MCF 10A (cell line): ENCODE measurements at regions of chr7 and their contacts with region 1.

Region 1: DNA sequence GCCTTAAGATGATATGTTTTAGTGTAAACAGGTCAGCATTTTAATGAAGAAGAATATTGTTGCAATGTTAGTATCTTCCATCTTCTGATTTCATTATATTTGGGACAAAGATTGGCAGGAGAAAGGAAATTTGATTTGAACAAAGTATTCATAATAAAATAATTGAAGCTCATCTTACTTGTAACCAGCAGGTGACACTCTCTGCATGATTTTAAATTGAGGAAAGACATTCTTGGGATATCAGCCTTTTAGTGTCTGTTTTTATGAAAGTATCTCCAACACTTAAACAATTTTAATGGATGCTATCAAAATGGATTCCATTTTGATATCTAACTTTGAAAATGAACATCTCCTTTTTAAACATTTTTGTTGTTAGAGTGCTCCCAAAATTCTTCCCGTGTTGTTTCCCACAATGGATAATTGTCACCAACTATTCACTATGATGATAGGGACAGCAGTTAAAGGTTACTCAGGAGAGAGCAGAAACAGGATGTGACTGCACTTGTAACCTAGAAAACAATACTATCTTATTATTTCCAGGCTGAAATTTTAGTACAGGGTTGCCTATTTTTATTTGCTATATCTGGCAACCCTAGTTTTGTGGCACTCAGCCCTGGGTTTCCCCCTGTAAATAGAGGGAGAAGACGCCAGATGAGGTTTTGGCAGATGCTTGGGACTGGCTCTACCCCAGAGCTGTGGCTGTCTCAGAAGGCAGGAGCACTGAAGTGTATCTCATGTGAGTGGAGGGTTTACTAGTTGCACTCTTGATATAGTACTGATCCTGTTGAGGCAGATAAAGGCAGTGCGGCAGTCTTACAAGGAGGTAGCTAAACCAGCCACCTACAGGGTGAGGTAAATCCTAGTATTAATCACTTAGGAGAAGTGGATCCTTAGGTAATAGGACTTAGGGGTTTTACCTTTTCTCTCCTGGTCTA is 31.0 kb upstream of the ABCB4 start:
- DNase-seq: peak; percentile 27
- H3K4me3 Mint-ChIP-seq: no peak overlapping the region
- H3K27ac Mint-ChIP-seq: no peak overlapping the region
- H3K4me1 Mint-ChIP-seq: no peaks in the 10 kb centered on the region
- H3K27me3 Mint-ChIP-seq: no peaks in the 10 kb centered on the region
- CTCF ChIP-seq: peak; percentile 60

Region 2: GRCh38 chr7:87013836-87014182 is 492.7 kb before region 1 on chr7:
- CTCF ChIA-PET with region 1: no interaction called
- POLR2A ChIA-PET with region 1: no interaction called
- intact Hi-C with region 1: no loop called
- DNase-seq: no peak
- H3K4me3 Mint-ChIP-seq: no peak overlapping the region
- H3K27ac Mint-ChIP-seq: no peak overlapping the region
- H3K4me1 Mint-ChIP-seq: peaks cover 9% of the 10 kb centered on the region
- H3K27me3 Mint-ChIP-seq: peaks cover 3% of the 10 kb centered on the region
- CTCF ChIP-seq: no peak

Region 3: DNA sequence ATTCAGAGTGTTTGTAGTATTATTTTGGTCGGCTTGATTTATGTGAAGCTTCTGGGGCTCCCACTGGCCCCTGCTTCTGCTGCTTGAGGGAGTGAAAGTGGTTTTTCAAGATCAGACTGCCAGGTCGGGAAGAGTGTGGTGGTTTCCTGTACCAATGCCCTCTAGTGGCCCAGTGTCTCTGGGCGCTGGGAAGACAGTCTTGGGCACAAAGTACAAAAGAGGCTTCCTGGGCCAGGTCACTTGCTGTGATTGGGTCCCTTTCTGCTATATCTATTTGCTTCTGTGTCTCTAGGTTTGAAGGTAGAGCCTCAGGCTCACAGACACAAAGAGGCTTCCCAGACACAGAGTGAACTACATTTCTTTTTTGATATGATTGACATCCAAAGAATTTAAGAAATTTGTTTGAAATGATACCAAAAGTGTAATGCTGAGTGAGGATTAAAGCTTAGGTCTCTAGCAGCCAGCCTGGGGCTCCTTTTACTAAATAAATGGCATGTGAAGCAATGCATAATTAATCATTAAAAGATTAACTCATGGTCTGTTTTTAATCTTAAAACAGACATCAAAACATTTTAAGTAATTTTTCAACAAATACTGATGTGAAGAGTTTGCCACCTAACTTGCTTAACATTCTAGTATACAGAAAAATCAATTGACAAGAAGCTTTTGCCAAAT is 57.9 kb after region 1 on chr7:
- CTCF ChIA-PET with region 1: interaction called, 6 read pairs
- POLR2A ChIA-PET with region 1: no interaction called
- intact Hi-C with region 1: loop called (anchors 2 kb)
- DNase-seq: peak; percentile 41
- H3K4me3 Mint-ChIP-seq: no peak overlapping the region
- H3K27ac Mint-ChIP-seq: no peak overlapping the region
- H3K4me1 Mint-ChIP-seq: no peaks in the 10 kb centered on the region
- H3K27me3 Mint-ChIP-seq: peaks cover 26% of the 10 kb centered on the region
- CTCF ChIP-seq: peak; percentile 35

Region 4: GRCh38 chr7:87658553-87658952 is 152.0 kb after region 1 on chr7:
- CTCF ChIA-PET with region 1: no interaction called
- POLR2A ChIA-PET with region 1: no interaction called
- intact Hi-C with region 1: no loop called
- DNase-seq: no peak
- H3K4me3 Mint-ChIP-seq: no peak overlapping the region
- H3K27ac Mint-ChIP-seq: no peak overlapping the region
- H3K4me1 Mint-ChIP-seq: no peaks in the 10 kb centered on the region
- H3K27me3 Mint-ChIP-seq: peaks cover 96% of the 10 kb centered on the region
- CTCF ChIP-seq: no peak

Region 5: GRCh38 chr7:87797798-87798403 is 291.4 kb after region 1 on chr7:
- CTCF ChIA-PET with region 1: interaction called, 6 read pairs
- POLR2A ChIA-PET with region 1: no interaction called
- intact Hi-C with region 1: loop called (anchors 5 kb)
- DNase-seq: peak; percentile 71
- H3K4me3 Mint-ChIP-seq: no peak overlapping the region
- H3K27ac Mint-ChIP-seq: no peak overlapping the region
- H3K4me1 Mint-ChIP-seq: no peaks in the 10 kb centered on the region
- H3K27me3 Mint-ChIP-seq: peaks cover 2% of the 10 kb centered on the region
- CTCF ChIP-seq: peak; percentile 54

Region 6: GRCh38 chr7:87866089-87866488 is 359.6 kb after region 1 on chr7:
- CTCF ChIA-PET with region 1: interaction called, 10 read pairs
- POLR2A ChIA-PET with region 1: no interaction called
- intact Hi-C with region 1: no loop called
- DNase-seq: no peak
- H3K4me3 Mint-ChIP-seq: no peak overlapping the region
- H3K27ac Mint-ChIP-seq: no peak overlapping the region
- H3K4me1 Mint-ChIP-seq: peaks cover 6% of the 10 kb centered on the region
- H3K27me3 Mint-ChIP-seq: no peaks in the 10 kb centered on the region
- CTCF ChIP-seq: no peak

Region 7: GRCh38 chr7:88111136-88111743 is 604.7 kb after region 1 on chr7:
- CTCF ChIA-PET with region 1: interaction called, 8 read pairs
- POLR2A ChIA-PET with region 1: interaction called, 5 read pairs
- intact Hi-C with region 1: loop called (anchors 1 kb)
- DNase-seq: peak; percentile 43
- H3K4me3 Mint-ChIP-seq: no peak overlapping the region
- H3K27ac Mint-ChIP-seq: no peak overlapping the region
- H3K4me1 Mint-ChIP-seq: no peaks in the 10 kb centered on the region
- H3K27me3 Mint-ChIP-seq: peaks cover 77% of the 10 kb centered on the region
- CTCF ChIP-seq: peak; percentile 51

Region 8: GRCh38 chr7:88146616-88147015 is 640.1 kb after region 1 on chr7:
- CTCF ChIA-PET with region 1: no interaction called
- POLR2A ChIA-PET with region 1: no interaction called
- intact Hi-C with region 1: no loop called
- DNase-seq: no peak
- H3K4me3 Mint-ChIP-seq: no peak overlapping the region
- H3K27ac Mint-ChIP-seq: no peak overlapping the region
- H3K4me1 Mint-ChIP-seq: no peaks in the 10 kb centered on the region
- H3K27me3 Mint-ChIP-seq: peaks cover 82% of the 10 kb centered on the region
- CTCF ChIP-seq: no peak

Region 9: DNA sequence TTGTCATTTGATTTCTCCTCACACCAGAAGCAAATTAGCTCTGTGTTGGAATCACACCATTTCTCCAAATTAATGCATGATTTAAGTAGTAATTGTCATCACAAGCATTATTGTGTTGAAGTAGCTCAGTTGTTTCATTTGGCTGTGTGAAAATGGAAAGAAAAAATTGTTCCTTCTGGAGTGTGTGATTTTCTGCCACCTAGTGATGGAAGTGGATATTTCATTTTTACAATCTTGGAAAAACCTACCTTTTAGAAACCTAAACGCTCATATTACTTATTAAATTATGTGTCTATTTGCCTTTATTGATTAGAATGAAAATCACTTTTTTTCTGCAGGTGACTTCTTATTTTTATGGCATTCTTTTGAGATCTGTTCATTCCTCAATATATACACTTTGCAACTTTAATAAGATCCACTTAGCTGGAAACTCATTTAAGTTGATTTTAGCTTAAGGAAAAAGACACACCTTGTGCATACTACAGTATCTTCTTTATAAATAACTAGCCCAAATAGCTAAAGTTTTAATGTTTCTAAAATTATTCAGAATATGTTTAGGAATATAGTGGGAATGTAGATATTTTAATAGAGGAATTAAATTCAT is 663.3 kb after region 1 on chr7:
- CTCF ChIA-PET with region 1: interaction called, 5 read pairs
- POLR2A ChIA-PET with region 1: no interaction called
- intact Hi-C with region 1: loop called (anchors 2 kb)
- DNase-seq: peak; percentile 22
- H3K4me3 Mint-ChIP-seq: no peak overlapping the region
- H3K27ac Mint-ChIP-seq: no peak overlapping the region
- H3K4me1 Mint-ChIP-seq: no peaks in the 10 kb centered on the region
- H3K27me3 Mint-ChIP-seq: peaks cover 48% of the 10 kb centered on the region
- CTCF ChIP-seq: peak; percentile 21